Mammary epithelial cell (primary cell): ENCODE measurements at regions of chr14 and their contacts with region 1.

Region 1: GRCh38 chr14:37116933-37117849 is 55.2 kb downstream of the SLC25A21 start:
- DNase-seq: peak; percentile 68
- H3K4me3 ChIP-seq: no peak overlapping the region
- H3K27ac ChIP-seq: no peak overlapping the region
- H3K4me1 ChIP-seq: peaks cover 16% of the 10 kb centered on the region
- H3K27me3 ChIP-seq: no peaks in the 10 kb centered on the region
- CTCF ChIP-seq: peak; percentile 47 to 70

Region 2: DNA sequence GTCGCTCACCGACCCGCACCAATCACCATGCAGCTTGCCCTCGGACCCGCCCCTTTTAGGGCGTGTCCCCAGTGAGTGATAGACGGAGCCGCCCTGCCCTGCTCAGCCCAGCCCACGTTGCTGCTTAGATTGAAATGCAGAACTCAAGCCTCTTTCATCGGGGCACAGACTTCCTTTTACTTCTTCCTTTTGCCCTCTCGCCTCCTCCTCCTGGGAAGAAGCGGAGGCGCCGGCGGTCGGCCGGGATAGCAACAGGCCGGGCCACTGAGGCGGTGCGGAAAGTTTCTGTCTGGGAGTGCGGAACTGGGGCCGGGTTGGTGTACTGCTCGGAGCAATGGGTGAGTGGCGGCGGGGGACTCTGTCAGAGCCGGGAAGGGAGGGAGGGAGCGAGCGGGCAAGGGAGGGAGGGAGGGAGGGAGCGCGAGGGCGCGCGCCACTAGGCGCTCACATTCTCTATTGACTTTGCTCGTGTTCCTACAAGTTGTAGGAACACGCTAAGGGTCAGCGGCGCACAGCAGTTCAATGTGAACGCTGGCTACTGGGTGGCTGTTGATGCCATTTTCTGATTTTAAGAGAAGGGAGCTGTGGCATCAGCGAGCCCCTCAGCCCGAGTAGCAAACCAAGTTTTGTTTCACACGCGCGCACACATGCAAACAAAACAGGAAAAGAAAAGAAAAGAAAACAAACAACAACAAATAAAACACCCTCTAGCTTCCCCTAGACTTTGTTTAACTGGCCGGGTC is 455.3 kb before region 1 on chr14 and contains the start of gene PAX9:
- CTCF ChIA-PET with region 1: interaction called, 4 read pairs
- dilution Hi-C with region 1: no loop called
- in situ Hi-C with region 1: loop called in 1 of 2 experiments (anchors 10 kb)
- intact Hi-C with region 1: loop called (anchors 2 kb)
- DNase-seq: peak; percentile 87
- H3K4me3 ChIP-seq: peak within 1 kb of the TSS; percentile 49 to 59 (median 56)
- H3K27ac ChIP-seq: peak within 1 kb of the TSS; percentile 16
- H3K4me1 ChIP-seq: peaks cover 25% of the 10 kb centered on the region
- H3K27me3 ChIP-seq: peaks cover 57% of the 10 kb centered on the region
- CTCF ChIP-seq: no peak
- total RNA-seq, gene PAX9: 3.7 to 5.4 TPM

Region 3: GRCh38 chr14:36996133-36996856 is 120.9 kb before region 1 on chr14:
- CTCF ChIA-PET with region 1: no interaction called
- dilution Hi-C with region 1: no loop called
- in situ Hi-C with region 1: no loop called
- intact Hi-C with region 1: loop called (anchors 5 kb)
- DNase-seq: peak; percentile 71
- H3K4me3 ChIP-seq: no peak overlapping the region
- H3K27ac ChIP-seq: no peak overlapping the region
- H3K4me1 ChIP-seq: peaks cover 16% of the 10 kb centered on the region
- H3K27me3 ChIP-seq: no peaks in the 10 kb centered on the region
- CTCF ChIP-seq: no peak

Region 4: GRCh38 chr14:37081202-37081601 is 36.0 kb before region 1 on chr14:
- CTCF ChIA-PET with region 1: no interaction called
- dilution Hi-C with region 1: no loop called
- in situ Hi-C with region 1: no loop called
- intact Hi-C with region 1: loop called (anchors 2 kb)
- DNase-seq: peak; percentile 93
- H3K4me3 ChIP-seq: no peak overlapping the region
- H3K27ac ChIP-seq: peak overlapping the region; percentile 67
- H3K4me1 ChIP-seq: no peaks in the 10 kb centered on the region
- H3K27me3 ChIP-seq: no peaks in the 10 kb centered on the region
- CTCF ChIP-seq: no peak

Region 5: GRCh38 chr14:37157987-37158386 is 40.8 kb after region 1 on chr14:
- CTCF ChIA-PET with region 1: no interaction called
- dilution Hi-C with region 1: no loop called
- in situ Hi-C with region 1: no loop called
- intact Hi-C with region 1: no loop called
- DNase-seq: no peak
- H3K4me3 ChIP-seq: no peak overlapping the region
- H3K27ac ChIP-seq: no peak overlapping the region
- H3K4me1 ChIP-seq: no peaks in the 10 kb centered on the region
- H3K27me3 ChIP-seq: no peaks in the 10 kb centered on the region
- CTCF ChIP-seq: no peak